AG04449 (cell line): ENCODE measurements at regions of chr3 and their contacts with region 1.

Region 1: DNA sequence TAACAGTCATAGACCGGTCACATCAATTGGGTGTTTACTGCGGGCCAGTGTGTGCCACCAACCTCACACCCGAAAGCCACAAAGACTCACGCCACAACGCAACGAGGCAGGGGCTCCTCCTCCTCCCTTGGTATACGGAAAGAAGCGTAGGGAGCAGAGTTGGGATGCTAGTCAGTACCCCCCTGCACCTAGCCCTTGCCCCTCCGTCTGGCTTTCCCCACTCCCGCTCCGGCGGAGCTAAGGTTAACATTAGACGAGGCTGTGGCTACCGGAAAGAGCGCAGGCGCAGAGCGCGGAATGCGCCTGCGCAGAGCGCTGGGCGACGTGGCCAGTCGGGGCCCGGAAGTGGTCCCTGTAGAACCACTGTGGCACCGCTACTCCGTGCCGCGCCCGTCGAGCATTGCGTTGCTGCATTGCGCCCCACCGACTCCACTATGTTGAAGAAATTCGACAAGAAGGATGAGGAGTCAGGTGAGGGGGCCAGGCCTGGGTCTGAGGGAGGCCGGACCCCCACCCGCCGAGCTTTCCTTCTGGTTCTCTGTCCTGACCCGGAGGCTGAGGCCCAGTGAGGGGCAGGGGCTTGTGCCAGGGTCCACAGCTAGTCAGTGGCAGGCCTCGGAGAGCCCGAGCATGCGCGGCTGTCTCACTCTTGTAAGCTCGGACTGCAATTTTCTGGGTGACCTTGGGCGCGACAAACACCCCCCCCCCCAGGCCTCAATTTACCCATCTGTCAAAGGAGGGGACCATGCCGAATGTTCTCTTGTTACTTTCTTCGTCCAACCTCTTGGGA is at the start of gene COPG1:
- DNase-seq: peak; percentile 14
- H3K4me3 ChIP-seq: peak within 1 kb of the TSS; percentile 98
- CTCF ChIP-seq: no peak

Region 2: GRCh38 chr3:129052675-129053074 is 196.8 kb before region 1 on chr3:
- CTCF ChIA-PET with region 1: interaction called, 216 read pairs
- POLR2A ChIA-PET with region 1: no interaction called
- DNase-seq: no peak
- H3K4me3 ChIP-seq: no peak overlapping the region
- CTCF ChIP-seq: no peak

Region 3: GRCh38 chr3:129120254-129121004 is 129.0 kb before region 1 on chr3:
- CTCF ChIA-PET with region 1: interaction called, 51 read pairs
- POLR2A ChIA-PET with region 1: interaction called, 4 read pairs
- DNase-seq: peak; percentile 50
- H3K4me3 ChIP-seq: peak overlapping the region; percentile 85
- CTCF ChIP-seq: peak; percentile 39

Region 4: DNA sequence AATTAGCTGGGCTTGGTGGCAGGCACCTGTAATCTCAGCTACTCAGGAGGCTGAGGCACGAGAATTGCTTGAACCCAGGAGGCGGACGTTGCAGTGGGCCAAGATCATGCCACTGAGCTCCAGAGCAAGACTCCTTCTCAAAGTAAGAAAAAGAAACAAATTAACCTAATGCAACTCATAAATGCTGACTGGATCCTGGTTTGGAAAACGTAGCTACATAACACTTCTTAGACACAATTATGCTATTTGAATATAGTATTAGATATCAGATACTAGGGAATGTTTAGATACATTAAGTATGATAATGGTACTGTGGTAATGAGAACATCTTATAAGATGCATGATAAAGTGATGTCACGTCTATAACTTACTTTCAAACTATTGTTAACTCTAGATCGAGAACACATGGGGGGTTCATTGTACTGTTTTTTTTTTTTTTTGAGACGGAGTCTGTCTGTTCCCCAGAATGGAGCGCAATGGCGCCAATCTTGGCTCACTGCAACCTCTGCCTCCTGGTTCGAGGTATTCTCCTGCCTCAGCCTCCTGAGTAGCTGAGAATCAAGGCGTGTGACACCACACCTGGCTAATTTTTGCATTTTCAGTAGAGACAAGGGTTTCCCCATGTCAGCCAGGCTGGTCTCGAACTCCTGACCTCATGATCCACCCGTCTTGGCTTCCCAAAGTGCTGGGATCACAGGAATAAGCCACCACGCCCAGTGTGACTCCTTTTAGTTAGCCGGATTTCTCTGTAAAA is 82.7 kb before region 1 on chr3:
- CTCF ChIA-PET with region 1: interaction called, 65 read pairs
- POLR2A ChIA-PET with region 1: interaction called, 18 read pairs
- DNase-seq: no peak
- H3K4me3 ChIP-seq: no peak overlapping the region
- CTCF ChIP-seq: no peak

Region 5: DNA sequence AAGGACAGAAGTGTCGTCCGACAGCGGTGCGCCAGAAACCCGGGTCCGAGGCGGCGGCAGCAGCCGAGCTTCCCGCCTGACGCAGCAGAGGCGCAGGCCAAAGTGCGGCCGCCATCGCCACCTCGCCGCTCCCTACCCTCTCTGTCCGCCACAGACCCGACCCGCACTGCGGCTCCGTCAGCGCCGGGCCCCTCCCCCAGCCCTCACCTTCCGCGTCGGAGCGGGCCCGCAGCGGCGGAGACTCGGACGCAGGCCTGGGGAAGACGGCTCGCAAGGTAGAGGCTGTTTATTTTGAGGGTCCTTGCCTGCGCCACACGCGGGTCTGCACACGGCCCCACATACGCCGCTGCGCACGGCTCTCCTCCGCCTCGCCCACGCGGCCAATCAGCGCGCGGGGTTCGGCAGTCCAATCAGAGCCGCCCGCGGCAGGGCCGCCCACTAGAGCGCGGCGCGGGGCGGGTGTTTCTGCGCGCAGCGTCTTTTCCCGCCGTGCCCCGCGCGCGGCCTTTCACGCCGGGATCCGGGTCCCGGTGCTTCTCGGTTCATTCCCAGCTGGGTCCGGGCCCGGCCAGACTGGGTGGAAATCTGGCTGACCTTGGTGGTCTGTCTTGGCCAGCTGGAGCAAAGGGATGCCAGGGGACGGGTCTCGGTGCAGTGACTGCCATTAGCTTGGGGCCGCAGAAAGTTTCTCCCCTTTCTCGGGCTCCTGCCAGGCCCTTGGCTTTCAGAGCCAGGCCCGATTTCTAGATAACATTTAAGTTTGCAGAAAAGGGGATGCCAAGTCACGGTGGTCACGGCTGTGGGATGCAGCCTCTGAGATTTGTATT is 65.7 kb before region 1 on chr3 and contains the start of gene CNBP:
- CTCF ChIA-PET with region 1: interaction called, 48 read pairs
- POLR2A ChIA-PET with region 1: interaction called, 6 read pairs
- DNase-seq: peak; percentile 46
- H3K4me3 ChIP-seq: peak within 1 kb of the TSS; percentile 96
- CTCF ChIP-seq: no peak

Region 6: GRCh38 chr3:129224984-129225393 is 24.5 kb before region 1 on chr3:
- CTCF ChIA-PET with region 1: interaction called, 81 read pairs
- POLR2A ChIA-PET with region 1: interaction called, 6 read pairs
- DNase-seq: peak; percentile 24
- H3K4me3 ChIP-seq: no peak overlapping the region
- CTCF ChIP-seq: no peak

Region 7: DNA sequence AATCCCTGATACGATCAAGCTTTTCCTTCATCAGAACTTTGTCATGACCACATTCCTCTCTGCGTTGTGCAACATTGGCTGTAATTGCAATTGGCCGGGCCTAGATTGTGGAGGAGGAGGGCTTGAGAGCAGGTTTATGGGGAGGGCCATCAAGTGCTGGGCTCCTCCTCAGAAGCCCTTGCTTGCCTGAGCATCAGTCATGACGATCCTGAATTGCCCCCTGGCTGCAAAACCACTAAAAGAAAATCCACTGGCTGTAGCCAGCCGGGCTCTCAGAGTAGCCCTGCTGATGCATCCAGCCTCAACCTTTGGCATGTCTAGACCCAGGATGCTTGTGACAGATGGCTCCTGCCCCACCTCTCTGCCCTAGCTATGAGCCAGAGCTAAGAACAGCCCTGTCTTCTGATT is 711.7 kb after region 1 on chr3:
- CTCF ChIA-PET with region 1: no interaction called
- POLR2A ChIA-PET with region 1: no interaction called
- DNase-seq: no peak
- H3K4me3 ChIP-seq: no peak overlapping the region
- CTCF ChIP-seq: no peak